Caco-2 (cell line): ENCODE measurements at regions of chr3 and their contacts with region 1.

Region 1: DNA sequence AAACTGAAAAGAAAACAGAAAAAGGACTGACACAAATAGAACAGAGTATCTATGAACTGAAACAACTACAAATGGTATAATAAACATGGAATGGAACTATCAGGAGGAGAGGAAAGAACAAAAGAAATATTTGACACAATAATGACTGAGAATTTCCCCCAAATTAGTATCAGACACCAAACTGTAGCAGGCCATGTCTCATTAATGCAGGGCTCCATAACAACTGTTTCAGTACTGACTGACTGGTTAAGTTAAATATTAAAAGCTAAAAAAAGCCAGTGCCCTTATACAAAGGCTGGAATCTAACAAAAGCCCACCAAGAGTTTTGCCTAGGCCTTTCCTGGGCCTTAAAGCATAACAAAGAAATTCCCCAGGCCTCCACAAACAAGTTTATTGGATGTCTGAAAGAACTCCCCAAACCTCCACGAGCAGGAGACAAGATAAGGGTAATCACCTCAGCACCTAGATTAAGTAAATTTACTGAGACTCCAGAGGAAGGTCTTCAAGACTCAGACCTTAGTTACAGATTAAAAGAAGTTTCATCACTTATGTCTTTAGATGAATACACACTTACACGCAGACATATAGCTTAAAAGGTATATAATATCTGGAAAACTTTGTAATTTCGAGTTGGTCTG is 45.7 kb downstream of the KPNA1 start:
- DNase-seq: peak; percentile 53 to 57
- H3K4me3 ChIP-seq: no peak overlapping the region
- H3K4me3 Mint-ChIP-seq: peak overlapping the region; percentile 20
- H3K27ac Mint-ChIP-seq: peak overlapping the region; percentile 1
- H3K4me1 ChIP-seq: peaks cover 34% of the 10 kb centered on the region
- H3K4me1 Mint-ChIP-seq: peaks cover 34% of the 10 kb centered on the region
- H3K27me3 ChIP-seq: no peaks in the 10 kb centered on the region
- H3K27me3 Mint-ChIP-seq: no peaks in the 10 kb centered on the region
- CTCF ChIP-seq: no peak

Region 2: DNA sequence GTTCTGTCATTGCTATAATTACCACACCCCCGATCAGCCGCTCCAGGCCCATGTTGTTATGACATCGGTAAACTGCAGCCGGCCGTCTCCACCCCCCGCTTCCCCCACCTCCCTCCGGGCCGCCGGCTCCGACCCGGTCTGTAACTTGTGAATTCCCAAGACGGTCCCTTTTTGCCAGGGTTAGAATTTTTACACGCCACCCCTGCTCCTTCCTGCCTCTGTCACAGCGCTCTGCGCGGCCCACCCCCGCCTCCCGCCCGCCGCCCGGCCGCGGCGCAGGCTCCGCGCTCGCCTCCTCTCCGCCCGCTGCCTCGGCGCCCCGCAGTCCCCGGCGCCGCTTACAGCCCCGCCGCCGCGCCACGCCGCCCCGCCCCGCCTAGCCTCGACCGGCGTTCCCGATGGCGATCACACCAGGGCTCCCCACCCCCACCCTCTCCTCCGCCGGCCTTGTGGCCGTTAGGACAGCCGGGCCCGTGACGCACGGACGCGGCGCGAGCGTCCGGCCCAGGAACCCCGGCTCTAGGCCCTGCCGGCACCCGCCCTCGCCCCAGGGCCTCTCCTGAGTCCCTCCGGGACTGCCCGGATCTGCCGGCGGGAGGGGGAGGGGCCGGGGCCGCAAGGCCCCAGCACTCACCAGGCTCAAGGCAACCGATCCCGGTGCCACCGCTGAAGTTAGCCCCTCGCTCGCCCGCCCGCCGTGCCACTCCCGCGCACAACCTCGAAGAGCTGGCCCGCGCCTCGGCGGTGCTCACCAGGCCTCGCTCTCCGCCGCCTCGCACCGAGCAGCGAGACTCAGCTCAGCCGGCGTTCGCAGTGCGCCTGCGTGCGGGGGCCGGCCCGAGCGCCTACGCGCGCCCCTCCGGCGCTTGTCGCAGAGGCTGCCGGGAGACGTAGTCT is 45.4 kb after region 1 on chr3 and contains the start of gene KPNA1:
- CTCF ChIA-PET with region 1: no interaction called
- POLR2A ChIA-PET with region 1: no interaction called
- intact Hi-C with region 1: loop called (anchors 5 kb)
- DNase-seq: peak; percentile 86 to 92
- H3K4me3 ChIP-seq: peak within 1 kb of the TSS; percentile 96
- H3K4me3 Mint-ChIP-seq: peak within 1 kb of the TSS; percentile 84
- H3K27ac Mint-ChIP-seq: peak within 1 kb of the TSS; percentile 71
- H3K4me1 ChIP-seq: peaks cover 18% of the 10 kb centered on the region
- H3K4me1 Mint-ChIP-seq: peaks cover 24% of the 10 kb centered on the region
- H3K27me3 ChIP-seq: no peaks in the 10 kb centered on the region
- H3K27me3 Mint-ChIP-seq: no peaks in the 10 kb centered on the region
- CTCF ChIP-seq: no peak
- total RNA-seq, gene KPNA1: 82.0 and 84.6 TPM in 2 replicates